B cell (primary cell): ENCODE measurements at regions of chr11 and their contacts with region 1.

Region 1: GRCh38 chr11:73995247-73995646 is 12.6 kb upstream of the UCP2 start:
- DNase-seq: peak; percentile 87
- ATAC-seq: peak; percentile 60
- H3K4me3 ChIP-seq: peak overlapping the region in 2 of 5 experiments; percentile 8 to 32
- H3K4me3 Mint-ChIP-seq: peak overlapping the region; percentile 77
- H3K27ac ChIP-seq: peak overlapping the region; percentile 83 to 98
- H3K27ac Mint-ChIP-seq: peak overlapping the region; percentile 100
- H3K4me1 ChIP-seq: peaks cover 91 to 92% of the 10 kb centered on the region in 2 donors
- H3K4me1 Mint-ChIP-seq: peaks cover 85% of the 10 kb centered on the region
- H3K27me3 ChIP-seq: no peaks in the 10 kb centered on the region
- H3K27me3 Mint-ChIP-seq: no peaks in the 10 kb centered on the region
- CTCF ChIP-seq: no peak

Region 2: DNA sequence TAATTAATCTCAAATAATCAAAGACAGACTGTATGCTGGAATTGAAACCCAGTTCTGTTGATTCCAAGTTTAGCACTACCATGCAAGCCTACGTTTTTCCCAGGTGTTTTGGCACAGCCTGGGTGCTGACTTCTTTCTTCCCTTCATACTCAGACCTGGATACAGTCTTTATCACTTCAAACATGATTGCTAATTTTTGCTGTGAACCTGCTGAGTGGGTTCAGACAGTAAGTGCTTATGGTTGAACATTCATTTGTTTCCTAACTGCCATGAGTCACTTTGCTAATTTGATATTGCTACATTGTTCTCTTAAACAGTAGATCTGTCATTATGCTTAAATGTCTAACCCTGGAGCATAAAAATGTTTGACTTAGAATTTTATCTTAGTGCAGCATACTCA is 106.2 kb before region 1 on chr11:
- CTCF ChIA-PET with region 1: no interaction called
- POLR2A ChIA-PET with region 1: no interaction called
- intact Hi-C with region 1: no loop called
- DNase-seq: no peak
- ATAC-seq: no peak
- H3K4me3 ChIP-seq: no peak overlapping the region
- H3K4me3 Mint-ChIP-seq: no peak overlapping the region
- H3K27ac ChIP-seq: no peak overlapping the region
- H3K27ac Mint-ChIP-seq: no peak overlapping the region
- H3K4me1 ChIP-seq: no peaks in the 10 kb centered on the region
- H3K4me1 Mint-ChIP-seq: no peaks in the 10 kb centered on the region
- H3K27me3 ChIP-seq: no peaks in the 10 kb centered on the region
- H3K27me3 Mint-ChIP-seq: no peaks in the 10 kb centered on the region
- CTCF ChIP-seq: no peak

Region 3: GRCh38 chr11:74011360-74012073 is 16.3 kb after region 1 on chr11:
- CTCF ChIA-PET with region 1: interaction called, 12 read pairs
- POLR2A ChIA-PET with region 1: interaction called, 14 read pairs
- intact Hi-C with region 1: loop called (anchors 1 kb)
- DNase-seq: peak; percentile 84
- ATAC-seq: peak; percentile 87
- H3K4me3 ChIP-seq: peak overlapping the region in 2 of 5 experiments; percentile 1 to 3
- H3K4me3 Mint-ChIP-seq: peak overlapping the region; percentile 73
- H3K27ac ChIP-seq: peak overlapping the region; percentile 72 to 90
- H3K27ac Mint-ChIP-seq: peak overlapping the region; percentile 97
- H3K4me1 ChIP-seq: peaks cover 63 to 67% of the 10 kb centered on the region in 2 donors
- H3K4me1 Mint-ChIP-seq: peaks cover 75% of the 10 kb centered on the region
- H3K27me3 ChIP-seq: no peaks in the 10 kb centered on the region
- H3K27me3 Mint-ChIP-seq: no peaks in the 10 kb centered on the region
- CTCF ChIP-seq: no peak

Region 4: DNA sequence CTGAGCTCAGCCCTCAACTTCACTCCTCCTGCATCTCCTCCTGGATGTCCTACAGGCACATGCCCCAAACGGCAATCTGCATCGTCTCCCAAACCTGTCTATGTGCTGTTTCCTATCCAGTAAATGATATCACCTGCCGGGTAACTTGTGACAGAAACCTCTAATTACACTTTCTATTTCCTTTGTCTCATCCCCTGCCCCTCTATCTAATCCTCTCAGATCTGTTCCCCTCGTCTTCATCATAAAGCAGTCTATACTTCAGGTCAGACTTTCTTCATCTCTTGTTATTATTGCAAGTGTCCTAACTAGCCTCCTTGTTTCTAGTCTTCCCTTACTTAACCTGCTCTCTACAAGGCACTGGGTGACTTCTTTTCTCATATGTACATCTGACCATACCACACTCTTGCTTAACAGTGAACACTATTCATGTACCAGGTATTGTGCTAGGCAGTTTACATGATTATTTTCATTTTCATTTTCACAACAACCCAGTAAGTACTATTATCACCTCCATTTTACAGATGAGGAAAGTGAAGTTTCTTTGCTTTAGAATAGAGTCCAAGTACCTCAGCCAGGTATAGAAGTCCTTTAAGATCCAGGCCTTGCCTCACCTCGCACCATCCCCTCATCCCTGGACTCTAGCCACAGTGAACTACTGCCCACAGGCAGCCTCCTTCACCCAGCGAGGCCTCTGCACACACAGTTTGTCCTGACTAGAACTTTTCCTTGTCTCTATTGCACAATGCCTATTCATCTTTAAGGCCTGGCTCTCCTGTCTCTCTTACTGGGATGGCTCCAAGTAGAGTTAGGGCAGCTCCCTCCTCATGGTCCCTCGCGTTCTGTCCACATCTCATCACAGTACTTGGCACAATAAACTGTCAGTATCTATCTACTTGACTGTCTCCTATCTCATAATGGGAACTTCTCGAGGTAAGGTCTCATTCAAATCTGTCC is 35.8 kb after region 1 on chr11:
- CTCF ChIA-PET with region 1: interaction called, 9 read pairs
- POLR2A ChIA-PET with region 1: no interaction called
- intact Hi-C with region 1: loop called (anchors 5 kb)
- DNase-seq: no peak
- ATAC-seq: no peak
- H3K4me3 ChIP-seq: no peak overlapping the region
- H3K4me3 Mint-ChIP-seq: no peak overlapping the region
- H3K27ac ChIP-seq: no peak overlapping the region
- H3K27ac Mint-ChIP-seq: peak overlapping the region; percentile 23
- H3K4me1 ChIP-seq: peaks cover 0 to 7% of the 10 kb centered on the region in 2 donors
- H3K4me1 Mint-ChIP-seq: peaks cover 17% of the 10 kb centered on the region
- H3K27me3 ChIP-seq: no peaks in the 10 kb centered on the region
- H3K27me3 Mint-ChIP-seq: no peaks in the 10 kb centered on the region
- CTCF ChIP-seq: no peak